ENCODE measurements at regions of chr12 and their contacts with region 1.

Region 1: GRCh38 chr12:25366122-25366521 is 115.4 kb upstream of the KRAS start:
- DNase-seq: no peak
- CTCF ChIP-seq: no peak

Region 2: DNA sequence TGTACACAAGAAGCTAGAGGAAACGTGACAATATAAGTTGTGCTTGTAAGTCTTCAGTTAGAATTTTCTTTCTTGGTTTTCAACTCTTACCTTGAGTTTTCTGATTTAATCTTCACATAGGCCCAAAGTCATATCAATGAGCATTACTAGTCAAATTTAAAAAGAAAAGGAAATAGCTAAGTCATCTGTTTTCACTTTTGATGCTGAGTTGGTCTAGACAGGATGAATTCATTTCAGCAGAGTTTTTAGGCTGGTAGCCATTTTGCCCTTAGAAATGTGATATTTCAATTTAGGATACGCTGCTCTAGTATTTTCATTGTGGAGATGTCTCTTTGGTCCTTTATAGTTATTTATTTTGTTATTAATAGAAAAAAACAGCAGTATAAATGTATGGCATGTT is 70.8 kb before region 1 on chr12:
- CTCF ChIA-PET with region 1: no interaction called
- POLR2A ChIA-PET with region 1: no interaction called
- DNase-seq: no peak
- CTCF ChIP-seq: no peak

Region 3: DNA sequence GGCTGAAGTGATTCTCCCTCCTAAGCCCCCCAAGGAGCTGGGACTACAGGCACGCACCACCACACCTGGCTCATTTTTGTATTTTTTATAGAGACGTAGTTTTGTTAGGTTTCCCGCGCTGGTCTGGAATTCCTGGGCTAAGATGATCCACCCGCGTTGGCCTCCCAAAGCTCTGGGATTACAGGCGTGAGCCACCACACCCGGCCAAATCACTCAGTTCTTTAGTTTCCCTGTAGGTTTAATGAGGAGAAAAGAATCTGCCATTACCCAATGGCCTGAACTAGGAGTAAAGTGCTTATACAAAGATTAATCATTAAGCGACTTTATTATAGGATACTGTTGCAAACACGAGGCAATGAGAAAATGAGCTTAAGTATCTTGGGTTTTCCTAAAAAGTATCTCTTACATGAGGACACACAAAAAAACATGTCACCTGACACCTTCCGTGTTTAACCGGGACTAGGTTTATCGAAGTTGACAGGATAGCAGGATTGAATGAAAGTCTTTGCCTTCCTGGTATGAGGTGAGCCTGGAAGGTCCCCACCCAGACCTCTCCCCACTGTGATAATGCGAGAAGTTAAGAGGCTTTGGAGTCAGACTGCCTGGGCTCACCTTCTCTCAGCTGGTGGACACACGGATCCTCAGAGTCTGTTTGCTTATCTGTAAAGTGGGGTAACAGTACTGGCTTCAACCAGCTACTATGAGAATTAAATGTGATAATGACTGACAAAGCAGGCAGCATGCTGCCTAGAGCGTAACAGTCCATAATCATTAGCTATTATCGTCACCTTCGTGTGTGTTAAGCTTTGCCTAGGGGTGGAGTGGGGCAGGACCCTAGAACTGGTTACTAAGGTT is 18.1 kb after region 1 on chr12:
- CTCF ChIA-PET with region 1: interaction called, 12 read pairs
- POLR2A ChIA-PET with region 1: interaction called, 3 read pairs
- DNase-seq: no peak
- CTCF ChIP-seq: no peak